ENCODE measurements at regions of chr9 and their contacts with region 1.

Region 1: DNA sequence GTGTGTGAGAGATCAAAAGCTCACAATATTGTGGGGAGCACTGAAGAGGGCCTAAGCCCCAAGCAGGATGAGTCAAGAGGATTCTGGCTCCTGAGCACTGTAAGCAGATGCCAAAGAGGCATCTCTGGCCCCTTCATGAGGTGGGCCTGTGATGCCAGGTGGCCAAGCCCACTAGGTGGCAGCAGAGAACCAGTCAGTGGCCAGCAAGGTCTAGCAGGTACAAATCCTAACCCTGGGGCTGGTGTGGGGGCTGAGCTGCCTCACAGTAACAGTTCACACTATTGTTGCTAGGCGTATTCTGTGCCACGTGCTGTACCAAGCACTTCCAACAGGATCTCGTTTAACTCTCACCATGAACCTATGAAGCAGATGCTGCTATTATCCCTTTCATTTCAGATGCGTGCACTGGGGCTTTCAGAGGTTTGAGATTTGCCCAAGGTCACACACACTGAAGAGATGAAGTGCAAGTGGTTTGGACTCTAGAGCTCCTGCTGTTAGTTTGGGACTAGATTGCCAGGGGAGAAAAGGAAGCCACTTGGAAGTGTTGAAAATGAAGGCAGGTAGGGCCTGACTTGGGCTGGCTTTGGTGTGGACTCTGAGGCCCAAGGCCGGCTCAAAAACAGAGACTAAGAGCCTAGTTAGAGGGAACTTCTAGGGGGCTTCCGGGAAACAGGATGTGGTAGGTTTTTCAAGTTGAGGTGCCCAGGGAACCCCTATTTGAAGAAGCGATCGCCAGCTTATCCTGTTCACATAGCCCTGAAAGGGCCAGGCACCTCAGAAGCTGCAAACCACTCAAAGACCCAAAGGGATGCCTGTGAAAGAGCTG is 4.4 kb upstream of the MLANA start:
- DNase-seq: peak; percentile 62 to 91 (median 82)
- ATAC-seq: peak; percentile 89
- H3K4me3 ChIP-seq: no peak overlapping the region
- H3K4me1 ChIP-seq: no peaks in the 10 kb centered on the region
- CTCF ChIP-seq: peak; percentile 87

Region 2: GRCh38 chr9:6055213-6055612 is 168.9 kb after region 1 on chr9:
- intact Hi-C with region 1: loop called in 1 of 2 experiments (anchors 10 kb)
- DNase-seq: peak in 1 of 3 donors; percentile 83
- ATAC-seq: peak; percentile 86
- H3K4me3 ChIP-seq: no peak overlapping the region
- H3K4me1 ChIP-seq: no peaks in the 10 kb centered on the region
- CTCF ChIP-seq: no peak

Measured in mucosa of descending colon (tissue), 3 donors.